GM13976 (cell line): ENCODE measurements at regions of chr3 and their contacts with region 1.

Region 1: GRCh38 chr3:195259475-195260279 is 11.3 kb downstream of the XXYLT1 start:
- DNase-seq: peak; percentile 96
- CTCF ChIP-seq: peak; percentile 96

Region 2: DNA sequence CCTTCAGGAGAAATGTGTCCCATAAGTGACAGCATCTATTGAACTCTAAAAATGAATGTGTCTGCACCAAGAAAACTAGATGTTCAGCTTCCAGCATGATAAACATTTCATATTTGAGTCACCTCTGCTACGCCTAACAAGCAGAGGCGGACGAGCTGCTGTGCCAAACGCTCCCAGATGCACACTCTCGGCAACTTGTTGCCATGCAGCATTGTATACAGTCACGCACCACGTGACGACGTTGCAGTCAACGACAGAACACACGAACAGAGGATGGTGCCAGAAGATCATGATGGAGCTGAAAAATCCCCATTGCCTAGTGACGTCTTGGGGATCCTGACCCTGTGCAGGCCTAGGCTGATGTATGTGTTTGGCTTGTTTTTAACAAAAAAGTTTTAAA is 126.2 kb before region 1 on chr3:
- in situ Hi-C with region 1: loop called (anchors 10 kb)
- DNase-seq: peak; percentile 55
- CTCF ChIP-seq: peak; percentile 18